Psoas muscle (tissue), 8 donors: ENCODE measurements at regions of chr3 and their contacts with region 1.

Region 1: GRCh38 chr3:197186887-197187588 is 111.4 kb downstream of the DLG1 start:
- DNase-seq: no peak
- ATAC-seq: peak; percentile 39 to 76 (median 70)
- H3K4me3 ChIP-seq: no peak overlapping the region
- H3K27ac ChIP-seq: no peak overlapping the region
- H3K4me1 ChIP-seq: peaks cover 18% of the 10 kb centered on the region
- H3K27me3 ChIP-seq: no peaks in the 10 kb centered on the region
- CTCF ChIP-seq: peak; percentile 88

Region 2: DNA sequence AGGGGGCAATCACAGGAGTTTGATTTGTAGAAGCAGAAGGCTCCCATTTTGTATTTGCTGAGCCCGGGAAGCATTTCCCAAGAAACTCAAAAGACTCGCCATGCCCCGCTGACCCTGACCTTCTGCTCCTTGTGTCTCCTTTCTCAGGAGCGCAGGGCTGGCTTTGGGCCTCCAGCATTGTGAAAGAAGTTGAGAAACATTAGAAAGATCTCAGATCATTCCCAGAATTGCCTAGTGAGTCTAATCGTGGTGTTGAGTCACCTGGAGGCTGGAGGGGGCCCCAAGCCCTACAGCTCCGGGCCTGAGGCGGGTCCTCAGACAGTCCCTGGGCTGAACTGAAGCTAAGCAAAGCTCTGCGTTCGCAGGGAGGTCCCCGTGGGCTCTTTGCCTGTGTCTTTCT is 207.5 kb before region 1 on chr3:
- intact Hi-C with region 1: loop called in 1 of 2 experiments (anchors 2 kb)
- DNase-seq: peak; percentile 31 to 70
- ATAC-seq: peak in 3 of 4 donors; percentile 24 to 33 (median 32)
- H3K4me3 ChIP-seq: no peak overlapping the region
- H3K27ac ChIP-seq: no peak overlapping the region
- H3K4me1 ChIP-seq: no peaks in the 10 kb centered on the region
- H3K27me3 ChIP-seq: no peaks in the 10 kb centered on the region
- CTCF ChIP-seq: no peak

Region 3: DNA sequence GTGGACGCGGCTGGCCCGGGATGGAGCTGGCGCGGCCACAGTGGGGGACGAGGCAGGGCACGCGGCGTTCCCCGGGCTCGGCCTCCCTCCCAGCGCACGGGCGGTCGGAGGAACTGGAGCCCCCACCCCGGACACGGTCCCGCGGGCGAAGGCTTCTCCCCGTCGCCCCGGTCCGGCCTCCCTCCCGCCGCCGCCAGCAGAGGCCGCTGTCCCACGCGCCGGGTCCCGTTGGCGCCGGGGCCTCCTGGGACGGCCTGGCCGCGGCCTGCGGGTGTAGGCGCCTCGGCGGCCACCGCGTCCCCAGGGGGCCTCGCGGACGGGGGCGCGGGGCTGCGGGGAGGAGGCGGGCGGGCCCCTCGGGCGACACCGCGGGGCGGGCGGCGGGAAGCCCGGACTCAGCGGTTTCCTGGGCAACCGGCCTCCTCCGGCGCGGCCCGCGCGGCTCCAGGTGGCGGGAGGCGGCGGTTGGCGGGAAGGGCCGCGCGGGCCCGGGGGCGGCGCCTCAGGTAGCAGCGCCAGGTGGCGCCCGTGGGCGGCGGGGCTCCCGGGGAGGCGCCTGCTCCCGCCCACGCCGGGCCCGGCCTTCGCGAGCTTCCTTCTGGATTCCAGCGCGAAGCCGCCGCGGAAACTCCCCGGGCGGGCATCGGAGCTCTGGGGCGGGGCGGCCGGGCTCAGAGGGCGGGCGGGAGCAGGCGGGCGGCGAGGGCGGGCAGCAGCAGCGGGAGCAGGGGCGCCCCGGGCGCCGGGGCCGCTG is 184.2 kb before region 1 on chr3:
- intact Hi-C with region 1: loop called (anchors 1 to 5 kb)
- DNase-seq: peak; percentile 82 to 85
- ATAC-seq: peak; percentile 89 to 97 (median 93)
- H3K4me3 ChIP-seq: peak overlapping the region; percentile 75
- H3K27ac ChIP-seq: peak overlapping the region; percentile 61
- H3K4me1 ChIP-seq: no peaks in the 10 kb centered on the region
- H3K27me3 ChIP-seq: no peaks in the 10 kb centered on the region
- CTCF ChIP-seq: peak; percentile 72